ENCODE measurements at regions of chr4 and their contacts with region 1.

Region 1: GRCh38 chr4:140595065-140595464 is 26.3 kb upstream of the UCP1 start:
- DNase-seq: peak; percentile 50
- ATAC-seq: peak; percentile 100
- H3K4me3 ChIP-seq: no peak overlapping the region
- H3K27ac ChIP-seq: no peak overlapping the region
- H3K4me1 ChIP-seq: no peaks in the 10 kb centered on the region
- H3K27me3 ChIP-seq: peaks cover 0 to 3% of the 10 kb centered on the region in 2 experiments; a peak in 1 of 5 replicates
- CTCF ChIP-seq: peak; percentile 79
- EP300 ChIP-seq: no peak
- POLR2A ChIP-seq: no peak
- RAD21 ChIP-seq: peak; percentile 62

Region 2: DNA sequence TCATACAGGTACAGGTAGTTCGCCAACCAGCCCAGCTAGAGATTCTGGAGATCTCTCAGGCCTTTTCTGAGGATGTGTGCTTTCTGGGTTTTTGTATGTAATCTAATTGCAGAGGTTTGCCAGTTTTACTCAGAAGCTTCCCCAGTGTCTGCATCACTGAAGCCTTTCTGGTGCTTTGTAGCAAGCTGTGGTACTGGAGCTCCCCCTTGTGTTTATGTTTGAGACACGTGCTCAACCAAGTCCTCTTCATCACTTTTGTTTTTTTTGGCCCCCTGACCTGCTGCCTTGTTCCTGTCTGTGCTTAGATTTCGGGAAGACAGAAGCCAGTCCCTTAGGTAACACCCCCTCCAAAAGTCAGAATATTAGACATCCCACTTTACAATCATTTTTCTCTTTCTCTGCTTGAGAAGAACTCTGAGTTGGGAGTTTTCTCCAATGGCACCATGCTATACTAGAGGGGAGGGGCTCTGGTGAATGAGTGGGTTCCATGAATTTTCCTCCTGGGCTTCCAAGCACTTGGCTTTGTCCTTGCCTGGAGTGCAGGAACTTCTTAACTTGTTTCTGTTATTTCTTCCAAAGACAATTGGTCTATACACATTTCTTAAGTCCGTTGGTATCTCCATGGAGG is 289.5 kb after region 1 on chr4:
- CTCF ChIA-PET with region 1: interaction called, 3 read pairs
- POLR2A ChIA-PET with region 1: no interaction called
- in situ Hi-C with region 1: no loop called
- intact Hi-C with region 1: loop called (anchors 1 kb)
- DNase-seq: peak; percentile 63
- ATAC-seq: peak; percentile 95
- H3K4me3 ChIP-seq: no peak overlapping the region
- H3K27ac ChIP-seq: no peak overlapping the region
- H3K4me1 ChIP-seq: peaks cover 7% of the 10 kb centered on the region
- H3K27me3 ChIP-seq: no peaks in the 10 kb centered on the region
- CTCF ChIP-seq: peak; percentile 82
- EP300 ChIP-seq: no peak
- POLR2A ChIP-seq: no peak
- RAD21 ChIP-seq: peak; percentile 55; the same call in 1 of the 2 replicates